ENCODE measurements at regions of chr7 and their contacts with region 1.

Region 1: DNA sequence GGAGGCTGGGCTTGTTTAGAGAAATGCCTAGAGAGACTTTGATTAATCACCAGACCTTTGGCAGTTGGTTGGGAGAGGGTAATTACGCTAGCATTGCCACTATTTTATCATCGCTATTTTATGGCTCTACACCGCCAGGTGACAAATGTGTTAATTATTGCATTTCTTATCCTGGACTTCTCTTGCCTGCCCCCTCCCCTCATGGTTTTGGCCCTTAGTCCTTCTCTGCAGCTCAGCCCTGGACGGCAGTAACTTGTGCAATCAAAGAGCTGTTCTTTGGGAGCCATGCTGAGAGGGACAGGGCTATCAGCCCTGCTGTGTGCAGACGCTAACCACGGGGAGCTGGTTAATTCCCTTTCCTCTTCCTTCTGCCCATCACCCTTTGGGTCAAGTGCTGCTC is 585.0 kb downstream of the AUTS2 start:
- DNase-seq: no peak
- ATAC-seq: no peak
- H3K4me3 ChIP-seq: no peak overlapping the region
- H3K27ac ChIP-seq: no peak overlapping the region
- H3K4me1 ChIP-seq: no peaks in the 10 kb centered on the region
- H3K27me3 ChIP-seq: no peaks in the 10 kb centered on the region
- CTCF ChIP-seq: no peak
- POLR2A ChIP-seq: no peak

Region 2: DNA sequence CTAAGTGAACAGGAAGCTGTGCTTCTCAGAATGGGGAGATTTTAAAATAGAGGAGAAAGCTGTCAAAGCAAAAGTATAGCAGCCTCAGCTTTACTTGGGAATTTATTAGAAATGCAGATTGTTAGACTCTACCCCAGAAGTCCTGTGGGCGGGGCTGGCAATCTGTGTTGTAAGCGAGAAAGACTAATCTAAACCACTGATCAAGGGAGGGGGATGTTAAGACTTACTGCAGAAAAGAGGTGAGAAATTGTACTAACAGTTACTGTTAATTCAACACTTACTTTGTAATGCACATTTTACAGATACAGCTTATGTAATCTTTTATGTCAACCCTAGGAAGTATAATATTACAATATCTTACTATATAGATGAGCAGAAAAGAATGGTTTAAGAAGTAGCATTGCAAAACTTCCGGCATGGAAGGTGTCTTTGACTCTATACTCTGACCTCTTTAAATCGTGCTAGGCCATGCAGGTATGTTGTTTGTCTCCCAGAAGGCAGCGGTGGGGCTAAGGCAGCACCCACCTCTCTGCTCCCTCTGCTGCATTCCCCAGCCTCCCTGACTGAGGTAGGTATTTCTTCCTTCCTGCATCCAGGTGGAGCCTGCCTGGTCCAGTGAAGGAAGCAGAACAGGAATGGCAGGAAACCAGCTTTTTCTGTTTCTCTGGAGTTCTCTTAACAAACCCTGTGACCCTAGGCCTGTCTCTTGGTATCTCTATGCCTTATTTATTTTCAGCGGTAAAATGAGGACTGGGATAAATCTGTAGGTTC is 122.8 kb before region 1 on chr7:
- intact Hi-C with region 1: no loop called
- DNase-seq: no peak
- ATAC-seq: no peak
- H3K4me3 ChIP-seq: no peak overlapping the region
- H3K27ac ChIP-seq: no peak overlapping the region
- H3K4me1 ChIP-seq: no peaks in the 10 kb centered on the region
- H3K27me3 ChIP-seq: no peaks in the 10 kb centered on the region
- CTCF ChIP-seq: no peak
- POLR2A ChIP-seq: no peak

Region 3: DNA sequence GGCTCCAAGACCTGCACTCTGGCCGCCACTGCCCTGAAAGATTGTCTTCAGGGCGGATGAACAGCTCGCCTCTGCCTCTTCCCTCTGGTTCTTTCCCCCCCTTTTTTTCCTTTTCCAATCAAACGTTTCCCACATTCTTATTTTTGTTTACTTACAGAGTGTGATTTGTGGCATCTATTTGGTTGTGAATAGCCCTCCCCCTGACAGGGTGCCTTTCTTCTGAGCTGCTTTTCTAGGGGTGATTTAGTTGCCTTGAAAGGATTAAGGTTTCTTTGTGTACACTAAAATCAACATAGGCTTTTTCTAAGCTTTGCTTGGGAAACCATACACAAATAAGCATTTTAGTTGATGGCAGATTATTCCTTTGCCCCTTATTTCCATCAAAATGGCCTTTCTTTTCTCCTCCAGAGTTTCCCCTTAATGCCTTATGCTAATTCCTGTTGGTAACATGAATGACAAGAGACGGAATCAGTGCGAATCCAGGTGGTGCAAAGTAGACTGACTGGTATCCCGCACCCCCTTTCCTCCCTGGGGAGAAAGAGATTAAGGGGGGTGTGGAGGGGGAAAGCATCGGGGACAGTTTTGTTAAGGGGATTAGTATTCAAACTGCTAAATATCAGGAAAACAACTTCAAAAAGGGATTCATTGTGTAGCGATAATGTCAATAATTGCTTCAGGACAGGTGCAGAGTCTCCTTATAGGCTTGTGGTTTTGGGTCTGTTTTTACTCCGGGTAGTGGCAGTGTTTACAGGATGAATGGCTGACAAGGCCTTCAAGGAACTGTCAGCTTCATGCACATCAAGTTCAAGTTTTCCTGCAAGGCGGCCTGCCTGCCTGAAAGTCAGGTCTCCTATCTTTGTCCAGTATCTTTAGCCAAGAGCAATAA is 517.0 kb after region 1 on chr7:
- intact Hi-C with region 1: loop called in 1 of 2 experiments (anchors 10 kb)
- DNase-seq: no peak
- ATAC-seq: no peak
- H3K4me3 ChIP-seq: no peak overlapping the region
- H3K27ac ChIP-seq: no peak overlapping the region
- H3K4me1 ChIP-seq: peaks cover 0 to 14% (median 0%) of the 10 kb centered on the region in 4 donors
- H3K27me3 ChIP-seq: no peaks in the 10 kb centered on the region
- CTCF ChIP-seq: no peak
- POLR2A ChIP-seq: no peak